ENCODE measurements at regions of chr2 and their contacts with region 1.

Region 1: GRCh38 chr2:28406276-28407096 is 13.8 kb downstream of the FOSL2 start:
- DNase-seq: peak; percentile 89
- H3K4me3 ChIP-seq: no peak overlapping the region
- H3K27ac ChIP-seq: peak overlapping the region; percentile 26
- H3K4me1 ChIP-seq: peaks cover 59% of the 10 kb centered on the region
- H3K27me3 ChIP-seq: no peaks in the 10 kb centered on the region
- CTCF ChIP-seq: no peak

Region 2: DNA sequence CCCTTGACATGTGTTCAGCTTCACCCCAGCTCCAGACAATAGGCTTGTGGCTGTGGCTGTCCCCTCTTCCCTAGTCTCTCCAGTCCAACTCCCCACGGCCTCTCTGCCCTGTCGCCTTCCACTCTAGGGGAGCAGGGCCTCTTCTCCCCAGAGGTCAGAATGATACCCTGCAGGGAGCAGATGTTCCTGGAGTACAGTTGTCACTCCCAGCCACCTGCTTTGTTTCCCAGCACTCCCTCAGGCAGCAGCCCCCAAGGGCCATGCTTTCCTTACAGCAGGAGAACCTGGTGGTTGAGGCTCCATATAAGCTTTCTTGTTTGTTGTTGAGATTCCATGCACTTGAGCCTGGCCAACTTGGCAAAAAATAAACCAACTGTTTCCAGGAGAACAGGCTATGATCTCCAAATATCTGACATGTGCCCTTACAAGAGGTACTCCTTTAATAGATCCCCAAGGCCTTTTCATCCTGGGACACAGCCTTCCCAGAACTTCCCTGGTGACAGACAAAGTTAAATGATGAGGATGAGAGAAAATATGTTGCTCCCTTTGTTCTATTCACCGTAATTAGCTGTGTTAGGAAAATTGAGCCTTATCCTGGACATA is 1513.5 kb before region 1 on chr2:
- CTCF ChIA-PET with region 1: no interaction called
- dilution Hi-C with region 1: no loop called
- in situ Hi-C with region 1: no loop called
- intact Hi-C with region 1: no loop called
- DNase-seq: no peak
- H3K4me3 ChIP-seq: no peak overlapping the region
- H3K27ac ChIP-seq: no peak overlapping the region
- H3K4me1 ChIP-seq: no peaks in the 10 kb centered on the region
- H3K27me3 ChIP-seq: peaks cover 3% of the 10 kb centered on the region
- CTCF ChIP-seq: no peak

Region 3: DNA sequence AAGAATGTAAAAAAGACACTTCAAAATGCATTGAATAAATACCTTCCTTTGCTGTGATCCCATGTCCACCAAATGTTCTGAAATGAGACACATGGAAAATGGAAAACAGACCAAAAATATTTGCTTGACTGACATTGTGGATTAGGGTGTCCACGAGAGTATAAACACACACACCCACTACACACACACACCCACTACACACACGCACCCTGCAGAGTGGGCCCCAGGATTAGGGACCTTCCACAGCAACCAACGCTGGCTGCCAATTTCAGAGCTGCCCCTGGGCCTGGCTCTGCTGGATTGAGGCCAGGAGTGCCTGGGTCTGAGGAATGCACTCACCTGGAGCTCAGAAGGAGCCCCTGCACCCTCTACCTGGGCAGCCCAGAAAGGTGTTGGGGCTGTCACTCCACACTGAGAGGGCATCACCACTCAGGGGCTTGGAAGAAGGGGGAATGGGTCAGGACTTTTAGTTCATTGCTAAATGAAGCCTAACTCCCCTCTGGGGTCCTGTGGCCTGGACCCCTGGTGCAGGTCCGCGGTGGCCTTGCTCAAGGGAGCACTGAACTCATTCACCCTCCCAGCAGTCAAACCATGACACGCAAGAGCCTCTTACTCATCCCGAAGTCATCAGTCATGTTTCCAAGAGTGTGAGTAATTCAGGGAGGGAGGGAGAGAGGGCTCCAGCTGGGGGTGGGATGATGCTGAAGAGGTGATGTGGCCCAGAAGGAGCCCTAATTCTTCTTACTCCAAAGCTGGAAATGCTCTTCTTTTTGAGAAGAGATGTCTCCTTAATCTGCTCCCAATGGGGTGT is 39.2 kb after region 1 on chr2:
- CTCF ChIA-PET with region 1: no interaction called
- dilution Hi-C with region 1: no loop called
- in situ Hi-C with region 1: loop called in 1 of 2 experiments (anchors 5 kb)
- intact Hi-C with region 1: no loop called
- DNase-seq: peak; percentile 98
- H3K4me3 ChIP-seq: no peak overlapping the region
- H3K27ac ChIP-seq: peak overlapping the region; percentile 85
- H3K4me1 ChIP-seq: peaks cover 63% of the 10 kb centered on the region
- H3K27me3 ChIP-seq: no peaks in the 10 kb centered on the region
- CTCF ChIP-seq: no peak

Measured in mammary epithelial cell (primary cell).